HEK293T (cell line): ENCODE measurements at regions of chr22 and their contacts with region 1.

Region 1: DNA sequence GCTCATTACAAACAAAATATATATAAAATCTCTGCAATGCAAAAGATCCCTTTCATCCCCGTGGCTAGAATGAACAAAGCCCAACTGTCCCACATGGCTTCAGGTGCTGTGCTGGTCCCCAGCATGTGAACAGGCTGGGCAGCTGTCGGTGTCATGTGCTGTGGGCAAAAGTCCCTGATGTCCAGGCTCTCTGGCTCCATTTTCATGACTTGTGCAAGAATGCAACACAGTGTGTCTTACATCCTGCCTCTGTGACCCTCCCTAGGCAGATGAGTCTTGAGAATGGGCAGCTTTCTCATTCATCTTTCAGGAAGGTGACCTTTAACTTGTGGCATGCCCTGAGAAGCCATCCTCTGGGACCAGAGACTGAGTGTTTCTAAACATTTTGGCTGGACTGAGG is 14.5 kb downstream of the GUCD1 start:
- DNase-seq: no peak

Region 2: DNA sequence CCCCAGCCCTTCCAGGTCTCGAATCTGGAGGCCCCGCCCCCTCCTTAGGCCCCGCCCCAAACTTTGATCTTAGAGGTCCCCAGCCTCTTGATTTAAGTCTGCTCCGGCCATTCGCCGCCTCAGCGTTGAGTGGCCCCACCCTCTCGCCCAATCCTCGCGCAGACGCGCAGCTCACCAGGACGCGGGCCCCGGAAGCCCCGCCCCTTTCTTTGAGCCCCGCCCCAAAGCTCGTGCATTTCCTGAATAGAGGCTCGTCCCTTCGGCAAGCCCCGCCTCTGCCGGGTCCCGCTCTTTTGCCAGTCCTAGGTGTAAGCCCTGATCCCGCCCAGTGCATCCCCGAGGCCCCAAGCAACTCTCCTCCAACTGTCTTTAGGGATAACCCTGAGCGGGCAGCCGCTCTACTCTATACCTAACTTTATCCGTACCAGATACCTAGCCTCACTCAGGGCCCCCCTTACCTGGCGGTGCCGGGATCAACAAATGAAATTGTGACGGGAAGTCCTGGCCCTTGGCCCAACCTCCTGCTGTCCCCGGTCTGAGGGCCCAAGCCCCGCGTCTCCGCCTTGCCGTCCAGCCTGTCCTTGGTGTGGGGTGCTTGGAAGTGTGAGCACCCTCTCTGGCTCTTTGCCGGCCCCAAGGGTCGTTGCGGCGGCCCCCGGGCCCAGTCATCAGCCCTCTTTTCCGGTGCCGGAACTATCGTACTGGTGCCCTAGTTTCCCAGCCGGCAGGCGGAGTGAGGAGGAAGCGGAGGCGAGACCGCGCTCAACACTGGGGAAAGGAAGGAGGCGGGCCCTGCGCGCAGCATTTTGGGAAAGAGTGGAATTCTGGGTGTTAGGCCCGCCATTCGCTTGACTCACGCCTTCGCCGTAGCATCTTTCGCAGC is 14.9 kb after region 1 on chr22 and contains the start of gene SNRPD3:
- CTCF ChIA-PET with region 1: no interaction called
- POLR2A ChIA-PET with region 1: interaction called, 13 read pairs
- DNase-seq: peak; percentile 100

Region 3: DNA sequence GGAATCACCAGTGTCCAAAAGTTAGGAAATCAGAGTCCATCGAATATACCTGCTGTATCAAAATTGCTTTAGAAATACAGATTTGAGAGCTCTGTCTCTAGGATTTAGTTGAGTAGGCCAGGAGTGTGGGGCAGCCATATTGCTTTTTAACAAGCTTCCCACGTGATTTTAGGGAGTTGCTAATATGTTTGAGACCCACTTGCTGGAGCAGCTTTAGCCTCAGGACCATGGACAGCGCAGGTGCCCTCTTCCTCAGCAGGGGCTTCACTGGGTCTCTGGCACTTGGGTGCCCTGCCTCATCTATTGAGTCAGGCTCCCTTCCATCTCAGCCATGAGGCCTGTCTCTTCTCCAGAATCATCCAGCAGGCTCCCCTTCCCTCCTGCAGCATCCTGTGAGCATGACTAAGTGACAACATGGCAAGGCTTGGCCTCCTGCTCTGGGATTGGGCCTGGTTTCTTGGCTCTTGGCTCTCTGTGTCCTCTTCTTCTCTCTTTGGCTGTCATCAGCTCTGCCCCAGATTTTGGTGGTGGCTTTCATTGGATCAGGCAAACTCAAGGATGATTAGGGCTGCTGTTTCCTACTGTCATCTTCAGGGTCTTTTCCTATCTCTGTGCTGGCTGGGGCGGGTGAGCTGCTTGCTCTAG is 335.5 kb after region 1 on chr22:
- CTCF ChIA-PET with region 1: no interaction called
- POLR2A ChIA-PET with region 1: no interaction called
- DNase-seq: peak; percentile 50